PC-9 (cell line): ENCODE measurements at regions of chr17 and their contacts with region 1.

Region 1: DNA sequence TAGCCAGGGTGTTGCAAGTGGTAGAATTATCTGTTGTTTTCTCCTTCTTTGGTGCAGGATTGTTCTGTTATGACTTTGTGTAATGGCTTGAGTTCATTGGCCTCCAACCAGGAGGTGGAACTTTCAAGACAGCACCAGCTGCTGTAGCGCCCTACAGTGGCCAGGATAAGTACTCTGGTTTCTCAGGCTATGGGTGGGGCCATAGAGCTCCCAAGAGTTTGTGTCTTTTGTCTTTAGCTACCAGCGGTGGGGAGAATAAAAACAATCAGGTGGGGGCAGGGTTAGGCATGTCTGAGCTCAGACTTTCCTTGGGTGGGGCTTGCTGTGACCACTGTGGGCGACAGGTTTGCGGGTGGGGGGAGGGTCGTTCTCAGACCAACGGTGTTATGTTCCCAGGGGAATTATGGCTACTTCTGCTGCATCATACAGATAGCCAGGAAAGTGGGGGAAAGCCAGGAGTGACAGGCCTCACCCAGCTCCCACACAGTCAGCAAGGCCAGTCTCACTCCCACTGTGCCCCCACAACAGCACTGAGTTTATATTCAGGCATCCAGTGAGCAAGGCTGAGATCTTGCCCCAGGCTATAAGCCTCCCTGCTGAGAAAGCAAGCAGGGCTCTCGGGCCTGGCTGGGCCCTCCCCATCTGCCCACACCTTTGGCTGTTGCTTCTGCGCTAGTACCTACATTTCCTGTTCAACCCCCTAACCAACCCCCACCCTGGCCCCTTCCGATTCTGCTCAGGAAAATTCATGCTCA is 15.4 kb downstream of the ABCA10 start:
- DNase-seq: peak in 1 of 2 experiments; percentile 28
- H3K4me3 ChIP-seq: no peak overlapping the region
- H3K27ac ChIP-seq: no peak overlapping the region
- H3K4me1 ChIP-seq: no peaks in the 10 kb centered on the region
- H3K27me3 ChIP-seq: no peaks in the 10 kb centered on the region
- CTCF ChIP-seq: no peak

Region 2: GRCh38 chr17:69012895-69013805 is 200.1 kb before region 1 on chr17:
- CTCF ChIA-PET with region 1: interaction called, 10 read pairs
- POLR2A ChIA-PET with region 1: no interaction called
- intact Hi-C with region 1: no loop called
- DNase-seq: no peak
- H3K4me3 ChIP-seq: no peak overlapping the region
- H3K27ac ChIP-seq: no peak overlapping the region
- H3K4me1 ChIP-seq: no peaks in the 10 kb centered on the region
- H3K27me3 ChIP-seq: no peaks in the 10 kb centered on the region
- CTCF ChIP-seq: no peak

Region 3: DNA sequence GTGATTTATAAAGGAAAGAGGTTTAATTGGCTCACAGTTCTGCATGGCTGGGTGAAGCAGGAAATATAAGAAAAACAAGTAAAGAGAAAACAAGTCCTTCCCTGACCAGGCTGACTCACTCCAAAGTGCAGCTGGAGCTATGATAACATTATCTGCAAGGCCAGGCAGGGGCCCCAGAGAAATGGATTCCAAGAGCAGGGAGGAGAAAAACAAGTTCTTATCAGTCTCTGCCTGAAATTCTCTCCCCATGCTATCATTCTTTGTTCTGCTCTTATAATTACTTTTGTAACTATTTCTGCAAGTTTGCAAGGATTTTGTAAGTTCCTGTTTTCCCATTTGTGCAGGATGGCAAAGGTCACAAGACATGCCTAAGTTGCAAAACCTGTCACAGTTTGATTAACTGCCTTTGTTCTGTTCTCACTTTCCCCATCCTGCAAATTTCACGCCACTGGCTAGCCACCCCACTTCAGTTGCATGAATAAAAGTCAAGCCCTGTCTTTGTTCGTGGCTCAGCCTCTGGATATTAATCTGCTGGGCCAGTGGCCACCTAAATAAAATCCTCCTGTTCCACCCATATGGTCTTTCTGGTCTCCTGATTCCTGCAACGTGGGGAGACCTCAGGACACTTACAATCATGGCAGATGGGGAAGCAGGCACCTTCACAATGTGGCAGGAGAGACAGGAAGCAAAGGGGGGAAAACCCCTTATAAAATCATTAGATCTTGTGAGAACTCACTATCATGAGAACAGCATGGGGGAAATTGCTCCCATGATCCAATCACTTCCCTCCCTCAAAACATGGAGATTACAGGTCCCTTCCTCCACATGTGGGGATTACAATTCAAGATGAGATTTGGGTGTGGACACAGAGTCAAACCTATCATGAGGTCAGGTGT is 165.6 kb before region 1 on chr17:
- CTCF ChIA-PET with region 1: no interaction called
- POLR2A ChIA-PET with region 1: no interaction called
- intact Hi-C with region 1: loop called (anchors 10 kb)
- DNase-seq: peak; percentile 63 to 68
- H3K4me3 ChIP-seq: peak overlapping the region; percentile 35; the same call in 1 of the 2 replicates
- H3K27ac ChIP-seq: peak overlapping the region; percentile 58
- H3K4me1 ChIP-seq: peaks cover 23% of the 10 kb centered on the region
- H3K27me3 ChIP-seq: no peaks in the 10 kb centered on the region
- CTCF ChIP-seq: no peak